ENCODE measurements at regions of chr6 and their contacts with region 1.

Region 1: DNA sequence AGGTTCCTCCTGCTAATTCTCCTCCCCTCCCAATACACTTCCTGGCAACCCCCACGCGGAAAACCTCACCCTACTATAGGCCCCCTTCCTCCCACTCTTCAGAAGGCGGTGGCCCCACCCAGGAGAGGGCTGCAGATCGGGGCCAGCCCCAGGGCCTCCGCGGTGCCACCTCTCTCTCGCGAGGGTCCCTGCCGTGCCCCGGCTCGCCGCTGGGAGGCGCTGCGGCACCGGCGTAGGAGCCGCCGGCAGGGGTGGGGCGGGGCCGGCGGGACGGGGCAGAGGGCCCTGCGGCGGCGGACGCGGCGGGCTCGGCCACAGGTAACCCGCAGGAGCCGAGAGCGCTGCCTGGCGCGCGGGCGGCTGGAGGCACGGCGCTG is at the start of gene ANKRD6:
- DNase-seq: peak; percentile 67
- H3K4me3 ChIP-seq: peak within 1 kb of the TSS; percentile 66
- H3K27ac ChIP-seq: no peak within 1 kb of the TSS
- H3K4me1 ChIP-seq: peaks cover 6% of the 10 kb centered on the region; the same call in 1 of the 2 replicates
- H3K27me3 ChIP-seq: peaks cover 36% of the 10 kb centered on the region
- total RNA-seq, gene ANKRD6: 1.0 and 12.4 TPM in 2 replicates

Region 2: DNA sequence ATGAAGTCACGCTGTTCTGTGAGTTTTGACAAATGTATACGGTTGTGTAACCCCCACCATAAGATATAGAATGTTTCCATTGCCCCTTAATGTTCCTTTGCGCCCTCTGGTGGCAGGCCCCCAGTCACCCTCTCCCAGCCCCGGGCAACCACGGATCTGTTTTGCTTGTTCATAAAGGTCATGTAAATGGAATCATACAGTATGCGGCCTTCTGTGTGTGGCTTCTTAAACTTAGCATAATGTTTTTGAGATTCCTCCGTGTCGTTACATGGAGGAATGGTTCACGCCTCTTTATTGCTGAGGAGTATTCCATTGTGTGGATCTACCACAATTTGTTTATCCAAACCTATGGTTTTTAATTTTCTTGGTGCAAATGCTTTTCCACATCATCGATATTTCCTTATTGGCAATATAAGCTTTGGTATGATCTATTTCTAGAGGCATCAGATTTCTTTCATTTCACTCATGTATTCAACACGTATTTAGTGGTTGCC is 177.3 kb after region 1 on chr6:
- in situ Hi-C with region 1: loop called (anchors 10 kb)
- DNase-seq: peak; percentile 66
- H3K4me3 ChIP-seq: no peak overlapping the region
- H3K27ac ChIP-seq: no peak overlapping the region
- H3K4me1 ChIP-seq: no peaks in the 10 kb centered on the region
- H3K27me3 ChIP-seq: no peaks in the 10 kb centered on the region

Region 3: GRCh38 chr6:90454836-90455427 is 1022.1 kb after region 1 on chr6:
- in situ Hi-C with region 1: no loop called
- DNase-seq: no peak
- H3K4me3 ChIP-seq: no peak overlapping the region
- H3K27ac ChIP-seq: no peak overlapping the region
- H3K4me1 ChIP-seq: no peaks in the 10 kb centered on the region
- H3K27me3 ChIP-seq: peaks cover 3% of the 10 kb centered on the region; the same call in 1 of the 2 replicates

Measured in GM23248 (cell line).